K562 (cell line): ENCODE measurements at regions of chr5 and their contacts with region 1.

Region 1: GRCh38 chr5:43040287-43041098 is at the start of gene ANXA2R:
- DNase-seq: peak; percentile 44 to 99 (median 58)
- ATAC-seq: peak; percentile 61
- H3K4me3 ChIP-seq: peak within 1 kb of the TSS; percentile 49
- H3K27ac ChIP-seq: peak within 1 kb of the TSS; percentile 94
- H3K4me1 ChIP-seq: peaks cover 6 to 39% of the 10 kb centered on the region in 2 experiments; a peak in 4 of 5 replicates
- H3K27me3 ChIP-seq: no peaks in the 10 kb centered on the region
- CTCF ChIP-seq: peak; percentile 93 to 98 (median 96)
- EP300 ChIP-seq: peak; percentile 74
- POLR2A ChIP-seq: peak; percentile 43
- RAD21 ChIP-seq: peak; percentile 75 to 89
- polyA plus RNA-seq, gene ANXA2R: 2.1 to 3.5 TPM

Region 2: GRCh38 chr5:42583322-42583721 is 457.2 kb before region 1 on chr5:
- CTCF ChIA-PET with region 1: no interaction called
- POLR2A ChIA-PET with region 1: no interaction called
- in situ Hi-C with region 1: no loop called
- intact Hi-C with region 1: loop called (anchors 10 kb)
- DNase-seq: peak; percentile 69 to 88 (median 75)
- ATAC-seq: peak; percentile 77
- H3K4me3 ChIP-seq: no peak overlapping the region
- H3K27ac ChIP-seq: no peak overlapping the region
- H3K4me1 ChIP-seq: peaks cover 16 to 32% of the 10 kb centered on the region in 2 experiments
- H3K27me3 ChIP-seq: peaks cover 0 to 7% of the 10 kb centered on the region in 2 experiments; a peak in 3 of 5 replicates
- CTCF ChIP-seq: peak; percentile 83 to 94 (median 93)
- EP300 ChIP-seq: peak; percentile 48; the same call in 1 of the 2 replicates
- POLR2A ChIP-seq: no peak
- RAD21 ChIP-seq: peak; percentile 69 to 81

Region 3: GRCh38 chr5:42908509-42909488 is 131.7 kb before region 1 on chr5:
- CTCF ChIA-PET with region 1: interaction called, 20 read pairs
- POLR2A ChIA-PET with region 1: interaction called, 4 read pairs
- in situ Hi-C with region 1: loop called (anchors 5 kb)
- intact Hi-C with region 1: loop called (anchors 1 kb)
- DNase-seq: peak; percentile 85 to 96 (median 88)
- ATAC-seq: peak; percentile 95
- H3K4me3 ChIP-seq: peak overlapping the region; percentile 31
- H3K27ac ChIP-seq: no peak overlapping the region
- H3K4me1 ChIP-seq: peaks cover 3 to 6% of the 10 kb centered on the region in 2 experiments; a peak in 2 of 5 replicates
- H3K27me3 ChIP-seq: peaks cover 3 to 7% of the 10 kb centered on the region in 2 experiments; a peak in 3 of 5 replicates
- CTCF ChIP-seq: peak; percentile 90 to 97 (median 92)
- EP300 ChIP-seq: no peak; the same call in 1 of the 2 replicates
- POLR2A ChIP-seq: no peak
- RAD21 ChIP-seq: peak; percentile 82 to 91

Region 4: GRCh38 chr5:43008369-43009153 is 31.9 kb before region 1 on chr5:
- CTCF ChIA-PET with region 1: interaction called, 6 read pairs
- POLR2A ChIA-PET with region 1: interaction called, 7 read pairs
- in situ Hi-C with region 1: no loop called
- intact Hi-C with region 1: loop called (anchors 1 kb)
- DNase-seq: peak; percentile 72 to 98 (median 80)
- ATAC-seq: peak; percentile 85
- H3K4me3 ChIP-seq: peak overlapping the region; percentile 46
- H3K27ac ChIP-seq: peak overlapping the region; percentile 93
- H3K4me1 ChIP-seq: peaks cover 16 to 21% of the 10 kb centered on the region in 2 experiments; a peak in 4 of 5 replicates
- H3K27me3 ChIP-seq: no peaks in the 10 kb centered on the region
- CTCF ChIP-seq: peak; percentile 53 to 62 (median 59)
- EP300 ChIP-seq: peak; percentile 99
- POLR2A ChIP-seq: peak; percentile 76
- RAD21 ChIP-seq: peak; percentile 22 to 54; a peak in 3 of 4 replicates

Region 5: DNA sequence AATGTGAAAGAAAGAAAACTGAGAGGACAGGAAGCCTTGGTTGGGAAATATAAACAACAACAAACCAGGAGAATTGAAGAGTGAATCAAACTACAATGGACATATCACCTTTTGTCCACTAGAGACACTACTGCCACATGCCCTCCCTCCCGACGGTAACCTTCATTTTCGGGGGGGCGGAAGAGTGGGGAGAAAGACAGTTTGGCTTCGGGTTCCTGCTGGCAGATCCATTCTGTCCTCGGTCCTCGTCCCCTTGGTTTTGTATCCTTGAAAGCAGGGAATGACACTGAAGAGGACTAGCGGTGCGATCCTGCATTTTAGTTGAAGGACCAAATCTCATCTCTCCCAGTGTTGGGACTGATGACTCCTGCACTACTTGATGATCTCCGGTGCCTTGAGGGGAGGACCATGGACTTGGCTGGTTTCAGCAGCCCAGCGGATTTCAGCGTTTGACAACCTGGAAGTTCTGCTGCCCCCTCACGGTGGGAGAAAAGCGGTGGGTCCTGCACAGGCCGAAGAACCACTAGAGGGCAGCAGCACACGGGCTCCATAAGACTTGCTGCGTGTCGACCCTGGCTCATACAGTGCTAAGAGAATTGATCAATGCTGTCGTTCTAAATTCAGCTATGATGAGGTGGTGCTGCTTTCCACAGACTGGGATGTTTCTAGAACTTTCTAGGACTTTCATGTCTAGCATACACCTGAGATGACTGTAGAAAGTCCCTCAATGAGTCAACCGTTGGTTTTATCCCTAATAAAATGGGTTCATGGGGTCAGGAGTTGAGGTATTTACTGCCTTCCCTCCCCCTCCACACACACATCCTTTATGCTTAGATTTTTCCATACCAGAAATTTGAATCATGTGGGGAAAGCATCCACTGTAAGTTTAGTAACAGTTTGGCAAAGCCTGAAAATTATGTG is 65.1 kb after region 1 on chr5:
- CTCF ChIA-PET with region 1: interaction called, 8 read pairs
- POLR2A ChIA-PET with region 1: interaction called, 3 read pairs
- in situ Hi-C with region 1: no loop called
- intact Hi-C with region 1: loop called (anchors 1 kb)
- DNase-seq: peak; percentile 90 to 99 (median 92)
- ATAC-seq: peak; percentile 96
- H3K4me3 ChIP-seq: peak overlapping the region; percentile 35
- H3K27ac ChIP-seq: peak overlapping the region; percentile 79
- H3K4me1 ChIP-seq: peaks cover 0 to 7% of the 10 kb centered on the region in 2 experiments; a peak in 2 of 5 replicates
- H3K27me3 ChIP-seq: no peaks in the 10 kb centered on the region
- CTCF ChIP-seq: peak; percentile 100
- EP300 ChIP-seq: no peak
- POLR2A ChIP-seq: no peak
- RAD21 ChIP-seq: peak; percentile 99